Activated naive CD4-positive, alpha-beta T cell treated with anti-CD3 and anti-CD28 coated beads for 36 hours (primary cell): ENCODE measurements at regions of chr12 and their contacts with region 1.

Region 1: GRCh38 chr12:120971299-120972179 is 6.8 kb upstream of the HNF1A start:
- DNase-seq: peak; percentile 62
- H3K4me3 Mint-ChIP-seq: no peak overlapping the region
- H3K27ac Mint-ChIP-seq: no peak overlapping the region
- H3K4me1 Mint-ChIP-seq: peaks cover 4% of the 10 kb centered on the region
- H3K27me3 Mint-ChIP-seq: no peaks in the 10 kb centered on the region

Region 2: GRCh38 chr12:120698665-120699064 is 272.9 kb before region 1 on chr12:
- CTCF ChIA-PET with region 1: no interaction called
- intact Hi-C with region 1: no loop called
- DNase-seq: no peak
- H3K4me3 Mint-ChIP-seq: no peak overlapping the region
- H3K27ac Mint-ChIP-seq: no peak overlapping the region
- H3K4me1 Mint-ChIP-seq: no peaks in the 10 kb centered on the region
- H3K27me3 Mint-ChIP-seq: no peaks in the 10 kb centered on the region

Region 3: GRCh38 chr12:120725659-120726509 is 245.7 kb before region 1 on chr12 and contains the start of gene ACADS:
- CTCF ChIA-PET with region 1: interaction called, 3 read pairs
- intact Hi-C with region 1: loop called (anchors 1 kb)
- DNase-seq: peak; percentile 91
- H3K4me3 Mint-ChIP-seq: peak within 1 kb of the TSS; percentile 74
- H3K27ac Mint-ChIP-seq: no peak within 1 kb of the TSS
- H3K4me1 Mint-ChIP-seq: peaks cover 14% of the 10 kb centered on the region
- H3K27me3 Mint-ChIP-seq: no peaks in the 10 kb centered on the region
- total RNA-seq, gene ACADS: 15.4 to 15.8 TPM

Region 4: DNA sequence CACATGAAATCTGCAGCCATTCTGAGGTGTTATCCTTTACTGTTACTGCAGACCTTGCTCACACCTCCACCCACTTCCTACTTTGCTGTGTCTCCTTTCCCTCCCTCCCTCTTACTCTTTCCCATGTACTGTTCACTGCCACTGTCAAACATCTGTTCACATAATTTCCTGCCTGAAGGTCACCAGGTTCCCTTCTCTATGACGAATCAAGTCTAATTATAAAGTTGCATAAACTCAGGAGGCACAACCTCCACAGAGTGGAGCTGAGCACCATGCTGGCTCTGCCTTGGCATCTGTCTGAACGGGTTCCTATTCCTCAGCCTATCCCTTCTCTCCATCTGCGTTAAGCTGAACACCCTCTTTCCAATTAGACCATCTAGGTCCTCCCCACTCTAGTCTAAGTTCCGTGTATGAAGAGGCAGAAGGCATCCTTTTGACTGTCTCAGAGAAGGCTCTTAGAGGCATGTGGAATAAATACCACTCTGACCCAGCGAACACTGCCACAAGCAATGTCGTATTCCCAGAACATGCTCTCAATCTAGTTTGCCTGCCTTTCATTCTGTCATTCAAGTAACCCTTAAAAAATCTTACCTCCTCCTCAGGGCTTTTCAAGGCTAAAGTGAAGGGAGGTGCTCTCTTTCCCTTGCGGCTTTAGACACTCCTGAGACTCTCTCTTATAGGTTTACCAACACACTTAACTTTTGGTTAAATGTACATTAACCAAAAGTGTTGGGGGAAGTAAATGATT is 197.2 kb before region 1 on chr12:
- CTCF ChIA-PET with region 1: no interaction called
- intact Hi-C with region 1: loop called (anchors 5 kb)
- DNase-seq: peak; percentile 41
- H3K4me3 Mint-ChIP-seq: no peak overlapping the region
- H3K27ac Mint-ChIP-seq: peak overlapping the region; percentile 54
- H3K4me1 Mint-ChIP-seq: peaks cover 25% of the 10 kb centered on the region
- H3K27me3 Mint-ChIP-seq: no peaks in the 10 kb centered on the region

Region 5: GRCh38 chr12:120904197-120904773 is 67.3 kb before region 1 on chr12 and contains the start of gene SPPL3:
- CTCF ChIA-PET with region 1: interaction called, 5 read pairs
- intact Hi-C with region 1: loop called (anchors 1 kb)
- DNase-seq: peak; percentile 91
- H3K4me3 Mint-ChIP-seq: peak within 1 kb of the TSS; percentile 99
- H3K27ac Mint-ChIP-seq: peak within 1 kb of the TSS; percentile 91
- H3K4me1 Mint-ChIP-seq: peaks cover 28% of the 10 kb centered on the region
- H3K27me3 Mint-ChIP-seq: no peaks in the 10 kb centered on the region
- total RNA-seq, gene SPPL3: 19.8 to 22.2 TPM

Region 6: DNA sequence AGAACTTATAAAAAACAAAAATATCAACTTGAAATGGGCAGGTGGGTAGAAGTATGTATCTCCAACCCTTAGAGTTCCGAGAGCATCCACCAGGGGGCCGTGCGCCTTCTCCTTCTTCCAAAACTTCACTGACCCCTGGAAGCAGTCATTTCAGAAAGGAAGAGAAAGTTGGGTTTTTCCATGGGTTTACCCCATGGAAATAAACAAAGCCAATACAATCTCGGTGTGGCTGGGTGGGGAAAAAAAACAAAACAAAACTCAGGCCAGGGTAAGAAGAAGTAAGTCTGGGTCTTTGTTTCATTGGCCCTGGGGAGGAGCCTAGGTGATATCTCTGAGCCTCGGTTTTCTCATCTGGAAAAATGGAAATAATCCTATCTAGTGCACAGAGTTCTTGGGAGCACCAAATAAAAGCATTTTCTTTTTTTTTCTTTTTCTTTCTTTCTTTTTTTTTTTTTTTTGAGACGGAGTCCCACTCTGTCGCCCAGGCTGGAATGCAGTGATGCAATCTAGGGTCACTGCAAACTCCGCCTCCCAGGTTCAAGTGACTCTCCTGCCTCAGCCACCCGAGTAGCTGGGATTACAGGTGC is 26.8 kb before region 1 on chr12:
- CTCF ChIA-PET with region 1: interaction called, 24 read pairs
- intact Hi-C with region 1: loop called (anchors 1 kb)
- DNase-seq: peak; percentile 85
- H3K4me3 Mint-ChIP-seq: no peak overlapping the region
- H3K27ac Mint-ChIP-seq: no peak overlapping the region
- H3K4me1 Mint-ChIP-seq: peaks cover 6% of the 10 kb centered on the region
- H3K27me3 Mint-ChIP-seq: no peaks in the 10 kb centered on the region

Region 7: DNA sequence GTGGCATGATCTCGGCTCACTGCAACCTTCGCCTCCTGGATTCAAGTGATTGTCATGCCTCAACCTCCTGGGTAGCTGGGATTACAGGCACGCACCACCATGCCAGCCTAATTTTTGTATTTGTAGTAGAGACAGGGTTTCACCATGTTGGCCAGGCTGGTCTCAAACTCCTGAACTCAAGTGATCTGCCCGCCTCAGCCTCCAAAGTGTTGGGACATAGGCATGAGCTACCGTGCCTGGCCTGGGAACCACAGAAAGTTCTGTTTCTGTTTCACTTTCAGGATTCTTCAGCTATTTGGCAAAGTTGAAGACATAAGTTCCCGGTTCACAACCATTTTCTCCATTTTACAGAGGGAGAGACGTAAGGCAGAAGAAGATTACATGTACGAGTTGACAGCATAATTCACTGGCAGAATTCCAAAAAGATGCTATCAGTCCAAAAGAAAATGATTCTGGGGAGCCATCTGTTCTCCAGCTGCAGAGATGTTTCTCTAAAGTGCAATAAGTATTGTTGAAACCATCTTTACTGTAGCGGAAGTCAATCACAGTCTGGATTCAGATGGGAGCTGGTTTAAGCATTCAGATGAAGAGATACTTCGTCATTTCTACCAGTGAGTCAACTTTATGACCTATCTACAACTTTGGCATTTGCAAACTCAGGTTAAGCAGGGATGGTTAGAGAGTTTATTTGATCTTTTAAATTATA is 420.2 kb after region 1 on chr12:
- CTCF ChIA-PET with region 1: no interaction called
- intact Hi-C with region 1: no loop called
- DNase-seq: peak; percentile 57
- H3K4me3 Mint-ChIP-seq: no peak overlapping the region
- H3K27ac Mint-ChIP-seq: no peak overlapping the region
- H3K4me1 Mint-ChIP-seq: peaks cover 9% of the 10 kb centered on the region
- H3K27me3 Mint-ChIP-seq: peaks cover 3% of the 10 kb centered on the region